A673 (cell line): ENCODE measurements at regions of chr10 and their contacts with region 1.

Region 1: GRCh38 chr10:132397671-132398565 is 918 bp downstream of the PWWP2B start:
- DNase-seq: peak; percentile 49
- H3K4me3 ChIP-seq: peak overlapping the region; percentile 69
- H3K27ac ChIP-seq: peak overlapping the region; percentile 76
- H3K4me1 ChIP-seq: peaks cover 17% of the 10 kb centered on the region
- H3K27me3 ChIP-seq: no peaks in the 10 kb centered on the region
- CTCF ChIP-seq: no peak

Region 2: DNA sequence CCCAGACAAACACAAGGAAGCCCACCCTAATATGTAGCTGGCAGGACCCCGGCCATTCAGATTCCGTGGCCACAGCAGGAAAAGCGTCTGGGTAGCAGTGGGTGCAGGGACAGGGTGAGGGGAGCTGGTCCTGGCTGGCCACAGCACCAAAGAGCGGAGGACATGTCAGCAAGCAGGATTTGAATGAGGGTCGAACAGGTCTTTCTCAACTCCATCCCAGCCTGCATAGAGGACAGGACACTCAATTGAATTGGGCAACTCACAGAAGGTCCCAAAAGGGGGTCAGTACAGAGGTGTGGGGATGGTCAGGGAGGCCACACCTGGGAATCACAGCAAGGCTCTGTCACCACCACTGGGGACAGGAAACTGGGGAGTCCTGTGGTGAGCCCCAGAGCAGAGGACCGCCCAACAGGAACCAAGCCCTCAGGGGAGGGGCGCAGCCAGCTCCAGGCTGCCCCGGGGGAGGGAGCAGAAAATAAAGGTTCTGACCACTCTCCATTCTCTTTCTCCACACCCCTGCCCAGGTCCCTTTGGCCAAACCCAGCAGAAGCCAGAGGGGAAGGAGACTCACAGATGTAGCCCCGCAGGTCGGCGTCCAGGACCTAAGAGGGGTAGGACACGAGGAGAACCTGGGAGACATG is 605.8 kb before region 1 on chr10:
- CTCF ChIA-PET with region 1: no interaction called
- POLR2A ChIA-PET with region 1: no interaction called
- intact Hi-C with region 1: no loop called
- DNase-seq: no peak
- H3K4me3 ChIP-seq: no peak overlapping the region
- H3K27ac ChIP-seq: no peak overlapping the region
- H3K4me1 ChIP-seq: no peaks in the 10 kb centered on the region
- H3K27me3 ChIP-seq: no peaks in the 10 kb centered on the region
- CTCF ChIP-seq: no peak

Region 3: GRCh38 chr10:132443983-132444876 is 46.3 kb after region 1 on chr10:
- CTCF ChIA-PET with region 1: no interaction called
- POLR2A ChIA-PET with region 1: no interaction called
- intact Hi-C with region 1: loop called (anchors 2 kb)
- DNase-seq: peak; percentile 95
- H3K4me3 ChIP-seq: peak overlapping the region; percentile 27
- H3K27ac ChIP-seq: peak overlapping the region; percentile 93
- H3K4me1 ChIP-seq: peaks cover 43% of the 10 kb centered on the region
- H3K27me3 ChIP-seq: no peaks in the 10 kb centered on the region
- CTCF ChIP-seq: no peak